ENCODE measurements at regions of chr5 and their contacts with region 1.

Region 1: GRCh38 chr5:150486402-150487198 is 21.3 kb upstream of the NDST1 start:
- DNase-seq: peak; percentile 70 to 91
- H3K4me3 ChIP-seq: peak overlapping the region; percentile 99
- H3K27ac ChIP-seq: peak overlapping the region; percentile 51
- H3K4me1 ChIP-seq: peaks cover 42% of the 10 kb centered on the region
- H3K27me3 ChIP-seq: no peaks in the 10 kb centered on the region
- CTCF ChIP-seq: no peak

Region 2: GRCh38 chr5:150464554-150465012 is 22.0 kb before region 1 on chr5:
- CTCF ChIA-PET with region 1: interaction called, 11 read pairs
- POLR2A ChIA-PET with region 1: no interaction called
- intact Hi-C with region 1: no loop called
- DNase-seq: no peak
- H3K4me3 ChIP-seq: no peak overlapping the region
- H3K27ac ChIP-seq: no peak overlapping the region
- H3K4me1 ChIP-seq: peaks cover 15% of the 10 kb centered on the region
- H3K27me3 ChIP-seq: no peaks in the 10 kb centered on the region
- CTCF ChIP-seq: no peak

Region 3: DNA sequence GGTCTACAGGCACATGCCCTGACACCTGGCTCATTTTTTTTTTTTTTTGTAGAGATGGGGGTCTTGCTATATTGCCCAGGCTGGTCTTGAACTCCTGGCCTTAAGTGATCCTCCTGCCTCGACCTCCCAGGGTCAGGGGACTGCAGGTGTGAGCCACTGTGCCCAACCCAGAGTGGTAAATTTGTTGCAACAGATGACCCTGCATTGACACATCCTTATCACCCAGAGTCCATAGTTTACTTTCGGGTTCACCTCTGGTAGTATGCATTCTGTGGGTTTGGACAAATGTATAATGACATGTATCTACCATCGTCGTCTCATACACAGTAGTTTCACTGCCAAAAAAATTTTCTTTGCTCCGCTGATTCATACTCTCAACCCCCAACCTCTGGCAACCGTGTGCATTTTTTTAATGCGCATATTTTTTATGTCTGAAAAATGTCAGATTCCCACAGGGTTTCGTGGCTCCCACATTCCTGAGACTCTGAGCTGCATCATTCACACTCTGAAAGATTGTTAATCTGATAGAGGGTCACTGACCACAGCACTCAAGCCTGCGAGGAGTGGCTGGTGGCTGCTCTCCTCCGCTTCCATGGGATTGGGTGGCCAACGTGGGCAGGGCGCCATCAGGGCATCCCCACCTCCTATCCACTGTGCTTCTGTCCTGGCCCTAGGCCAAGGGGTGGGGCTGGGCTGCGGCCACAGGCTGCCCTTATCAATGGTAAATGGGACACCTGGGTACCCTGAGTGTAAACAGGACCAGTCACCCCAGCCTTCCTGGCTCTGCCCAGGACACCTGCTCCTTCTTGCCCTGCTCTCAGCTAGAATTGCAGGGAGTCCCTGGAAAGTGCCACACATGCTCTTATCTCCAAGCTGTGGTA is 30.9 kb after region 1 on chr5:
- CTCF ChIA-PET with region 1: no interaction called
- POLR2A ChIA-PET with region 1: interaction called, 4 read pairs
- intact Hi-C with region 1: loop called (anchors 1 kb)
- DNase-seq: peak; percentile 96 to 100
- H3K4me3 ChIP-seq: no peak overlapping the region
- H3K27ac ChIP-seq: peak overlapping the region; percentile 72
- H3K4me1 ChIP-seq: peaks cover 45% of the 10 kb centered on the region
- H3K27me3 ChIP-seq: no peaks in the 10 kb centered on the region
- CTCF ChIP-seq: no peak

Region 4: GRCh38 chr5:150640311-150641005 is 153.9 kb after region 1 on chr5 and contains the start of gene SYNPO:
- CTCF ChIA-PET with region 1: no interaction called
- POLR2A ChIA-PET with region 1: no interaction called
- intact Hi-C with region 1: loop called (anchors 5 kb)
- DNase-seq: peak; percentile 70 to 87
- H3K4me3 ChIP-seq: peak within 1 kb of the TSS; percentile 42; the same call in 1 of the 2 replicates
- H3K27ac ChIP-seq: peak within 1 kb of the TSS; percentile 62
- H3K4me1 ChIP-seq: peaks cover 91% of the 10 kb centered on the region
- H3K27me3 ChIP-seq: no peaks in the 10 kb centered on the region
- CTCF ChIP-seq: no peak
- total RNA-seq, gene SYNPO: 1.8 and 2.0 TPM in 2 replicates

Region 5: DNA sequence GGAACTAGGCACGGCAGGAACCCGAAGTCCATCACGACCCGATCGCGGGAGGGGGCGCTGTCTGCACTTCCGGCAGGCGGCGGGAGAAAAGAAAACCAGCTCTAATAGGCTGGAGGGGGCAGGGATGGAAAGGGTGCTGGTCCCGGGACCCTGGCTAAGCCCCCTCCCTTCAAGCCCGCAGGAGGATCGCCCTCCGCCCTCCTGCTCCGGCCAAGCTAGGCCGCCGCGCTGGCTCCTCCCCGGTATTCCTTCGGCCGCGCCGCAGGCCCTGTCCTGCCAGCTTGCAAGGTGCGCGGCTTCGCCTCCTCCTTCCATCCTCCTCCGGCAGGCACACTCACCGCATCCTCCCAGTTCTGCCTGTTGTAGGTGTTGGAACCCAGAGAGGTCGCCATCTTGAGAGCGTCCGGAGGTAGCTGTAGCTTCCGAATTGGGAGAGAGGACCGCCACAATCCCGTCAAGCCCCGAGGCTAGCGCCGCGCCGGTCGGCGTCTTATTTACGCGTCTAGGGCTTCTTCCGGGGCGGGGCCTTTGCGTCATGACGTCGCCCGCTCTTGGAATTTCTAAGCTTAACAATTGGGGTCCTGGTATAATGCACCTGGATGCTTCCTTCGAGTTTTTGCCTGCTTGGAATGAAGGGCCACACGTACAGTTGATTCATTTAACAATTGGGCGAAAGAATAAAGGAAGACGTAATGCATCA is 214.1 kb after region 1 on chr5 and contains the start of gene RBM22:
- CTCF ChIA-PET with region 1: interaction called, 10 read pairs
- POLR2A ChIA-PET with region 1: no interaction called
- intact Hi-C with region 1: no loop called
- DNase-seq: peak; percentile 74 to 89
- H3K4me3 ChIP-seq: peak within 1 kb of the TSS; percentile 86
- H3K27ac ChIP-seq: peak within 1 kb of the TSS; percentile 59
- H3K4me1 ChIP-seq: peaks cover 20% of the 10 kb centered on the region; the same call in 1 of the 2 replicates
- H3K27me3 ChIP-seq: no peaks in the 10 kb centered on the region
- CTCF ChIP-seq: peak; percentile 65
- total RNA-seq, gene RBM22: 49.7 and 57.3 TPM in 2 replicates